ENCODE measurements at regions of chr12 and their contacts with region 1.

Region 1: GRCh38 chr12:63802012-63802608 is 22.4 kb downstream of the RXYLT1 start:
- DNase-seq: no peak
- ATAC-seq: no peak

Region 2: DNA sequence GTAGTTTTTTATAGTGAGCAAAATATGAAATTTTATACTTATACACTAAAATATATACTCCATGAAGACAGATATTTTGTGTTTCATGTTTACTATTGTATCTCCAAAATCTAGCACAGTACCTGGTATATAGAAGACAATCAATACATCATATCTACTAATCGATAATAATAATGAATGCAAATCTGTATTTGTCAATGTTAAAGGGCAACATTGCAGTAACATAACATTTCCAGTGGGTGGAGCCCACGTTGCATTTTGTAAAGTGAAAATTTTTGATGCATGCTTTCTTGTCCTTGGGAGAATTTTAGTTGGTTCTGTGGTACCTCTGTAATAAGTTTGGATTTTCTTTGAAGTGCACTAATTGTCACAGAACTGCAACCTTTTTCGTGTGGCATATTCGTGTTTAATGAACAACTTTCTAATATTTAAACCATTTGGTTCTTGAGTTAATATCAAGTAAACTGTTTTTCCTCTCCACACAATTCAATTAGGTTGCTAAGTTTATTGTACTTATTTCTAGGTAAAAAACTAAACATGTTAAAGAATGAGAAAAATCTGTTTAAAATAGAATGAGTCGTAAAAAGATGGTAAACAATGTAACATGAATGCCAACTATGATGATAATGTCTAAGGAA is 698.5 kb before region 1 on chr12:
- intact Hi-C with region 1: loop called in 1 of 2 experiments (anchors 10 kb)
- DNase-seq: no peak
- ATAC-seq: no peak

Region 3: GRCh38 chr12:63668028-63668799 is 133.9 kb before region 1 on chr12 and contains the start of gene DPY19L2:
- intact Hi-C with region 1: loop called in 1 of 2 experiments (anchors 10 kb)
- DNase-seq: peak; percentile 51 to 63
- ATAC-seq: peak; percentile 70
- total RNA-seq, gene DPY19L2: 0.85 to 1.7 TPM

Region 4: GRCh38 chr12:63753744-63754143 is 48.4 kb before region 1 on chr12:
- intact Hi-C with region 1: no loop called
- DNase-seq: no peak
- ATAC-seq: no peak

Region 5: DNA sequence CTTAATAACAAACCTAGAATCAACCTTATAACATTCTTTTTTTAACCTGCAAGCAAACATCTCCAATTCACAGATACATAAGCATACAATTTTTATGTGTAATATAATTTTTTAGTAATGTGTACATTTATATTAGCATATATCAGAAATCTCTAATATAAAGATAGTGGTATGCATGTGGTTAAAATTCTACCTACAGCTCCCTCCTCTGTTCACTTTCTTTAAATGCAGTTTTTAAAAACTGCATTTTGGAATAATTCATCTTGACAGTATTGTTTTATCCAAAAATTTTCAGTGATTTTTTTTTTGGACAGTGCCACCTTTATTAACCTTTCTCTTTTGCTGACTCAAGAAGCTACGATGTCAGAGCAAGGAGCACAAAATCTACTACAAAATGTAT is 35.6 kb before region 1 on chr12:
- intact Hi-C with region 1: no loop called
- DNase-seq: no peak
- ATAC-seq: no peak

Measured in left colon (tissue), 2 donors.